Aorta (tissue), 5 donors: ENCODE measurements at regions of chr9 and their contacts with region 1.

Region 1: DNA sequence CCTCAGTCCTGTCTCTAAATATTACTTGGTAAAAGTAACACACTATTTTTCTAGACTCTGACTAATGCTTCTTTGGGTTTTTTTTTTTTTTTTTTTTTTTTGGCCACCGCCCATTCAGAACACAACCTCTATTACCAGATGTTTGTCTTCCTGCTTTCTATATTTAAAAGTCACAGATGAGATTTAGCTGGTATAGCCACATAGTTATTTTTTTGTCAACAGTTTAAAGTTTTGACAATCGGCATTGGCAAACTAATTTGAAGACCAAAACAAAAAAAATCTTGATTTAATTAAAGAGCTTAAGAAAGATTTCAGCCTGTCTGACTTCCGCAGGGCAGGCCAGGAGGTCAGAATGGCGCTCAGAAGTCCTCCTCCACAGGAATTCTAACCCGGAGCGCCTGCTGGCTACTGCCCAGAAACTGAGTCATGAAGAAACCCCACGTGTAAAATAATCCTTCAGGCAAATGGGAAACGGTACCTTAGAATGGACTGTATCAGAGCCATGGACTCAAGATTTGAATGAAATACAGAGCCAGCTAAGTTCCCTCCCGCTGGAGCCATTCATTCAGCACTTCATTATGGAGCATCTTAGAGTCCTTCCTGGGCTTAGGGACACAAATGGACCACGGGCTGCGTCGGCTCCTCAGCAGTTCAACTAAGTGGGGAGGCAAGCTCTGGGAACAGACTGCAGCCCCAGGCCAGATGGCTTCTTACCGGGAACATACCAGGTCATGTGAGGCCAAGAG is 55.6 kb downstream of the PTPDC1 start:
- DNase-seq: peak; percentile 94
- ATAC-seq: peak; percentile 92
- H3K4me3 ChIP-seq: no peak overlapping the region
- H3K27ac ChIP-seq: peak overlapping the region; percentile 46 to 81
- H3K4me1 ChIP-seq: peaks cover 5% of the 10 kb centered on the region in 2 donors
- H3K27me3 ChIP-seq: no peaks in the 10 kb centered on the region

Region 2: DNA sequence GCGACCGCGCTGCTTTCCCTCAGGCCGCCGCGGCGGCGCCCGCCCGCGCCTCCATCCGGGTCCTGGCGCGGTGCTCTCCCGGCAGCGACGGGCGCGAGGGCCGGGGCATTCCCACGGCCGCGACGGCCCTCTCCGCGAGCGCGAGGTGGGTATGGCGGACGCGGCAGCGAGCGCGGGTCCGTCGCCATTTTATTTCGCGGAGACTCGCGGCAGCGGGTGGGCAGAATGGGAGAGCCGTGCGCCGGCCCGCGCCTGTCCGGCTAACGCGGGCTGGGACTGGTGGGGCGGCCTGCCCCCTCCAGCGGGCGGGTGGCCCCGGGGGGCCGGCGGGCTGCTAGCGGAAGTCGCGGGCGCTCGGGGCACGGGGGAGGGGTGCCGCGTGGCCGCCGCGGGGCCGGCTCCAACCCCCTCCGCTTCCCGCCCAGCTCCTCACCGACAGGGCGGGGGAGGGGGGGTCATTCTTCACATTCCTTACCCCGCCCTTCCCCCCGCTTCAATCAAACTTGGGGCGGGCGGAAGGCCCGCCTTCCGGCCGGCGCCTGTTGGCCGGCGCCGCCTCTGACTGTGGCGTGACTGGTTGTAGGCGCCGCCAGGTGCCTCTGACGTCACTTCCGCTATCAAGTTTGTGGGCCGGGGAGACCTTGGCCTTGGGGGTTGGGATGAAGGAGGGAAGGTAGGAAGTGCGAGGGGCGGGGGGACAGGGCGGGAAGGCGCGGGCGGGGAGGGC is 26.6 kb after region 1 on chr9:
- intact Hi-C with region 1: loop called in 1 of 2 experiments (anchors 2 kb)
- DNase-seq: peak; percentile 98
- ATAC-seq: peak; percentile 90
- H3K4me3 ChIP-seq: peak overlapping the region; percentile 72 to 85
- H3K27ac ChIP-seq: peak overlapping the region; percentile 65 to 97
- H3K4me1 ChIP-seq: peaks cover 0 to 2% of the 10 kb centered on the region in 2 donors
- H3K27me3 ChIP-seq: no peaks in the 10 kb centered on the region